B cell (primary cell): ENCODE measurements at regions of chr5 and their contacts with region 1.

Region 1: GRCh38 chr5:139560752-139561654 is at the start of gene UBE2D2:
- DNase-seq: peak; percentile 98
- ATAC-seq: peak; percentile 88
- H3K4me3 ChIP-seq: peak within 1 kb of the TSS; percentile 56 to 92 (median 87)
- H3K4me3 Mint-ChIP-seq: peak within 1 kb of the TSS; percentile 97
- H3K27ac ChIP-seq: peak within 1 kb of the TSS; percentile 75 to 91
- H3K27ac Mint-ChIP-seq: peak within 1 kb of the TSS; percentile 91
- H3K4me1 ChIP-seq: peaks cover 35 to 39% of the 10 kb centered on the region in 2 donors
- H3K4me1 Mint-ChIP-seq: peaks cover 32% of the 10 kb centered on the region
- H3K27me3 ChIP-seq: no peaks in the 10 kb centered on the region
- H3K27me3 Mint-ChIP-seq: no peaks in the 10 kb centered on the region
- CTCF ChIP-seq: no peak
- total RNA-seq, gene UBE2D2: 168 and 183 TPM in 2 replicates

Region 2: DNA sequence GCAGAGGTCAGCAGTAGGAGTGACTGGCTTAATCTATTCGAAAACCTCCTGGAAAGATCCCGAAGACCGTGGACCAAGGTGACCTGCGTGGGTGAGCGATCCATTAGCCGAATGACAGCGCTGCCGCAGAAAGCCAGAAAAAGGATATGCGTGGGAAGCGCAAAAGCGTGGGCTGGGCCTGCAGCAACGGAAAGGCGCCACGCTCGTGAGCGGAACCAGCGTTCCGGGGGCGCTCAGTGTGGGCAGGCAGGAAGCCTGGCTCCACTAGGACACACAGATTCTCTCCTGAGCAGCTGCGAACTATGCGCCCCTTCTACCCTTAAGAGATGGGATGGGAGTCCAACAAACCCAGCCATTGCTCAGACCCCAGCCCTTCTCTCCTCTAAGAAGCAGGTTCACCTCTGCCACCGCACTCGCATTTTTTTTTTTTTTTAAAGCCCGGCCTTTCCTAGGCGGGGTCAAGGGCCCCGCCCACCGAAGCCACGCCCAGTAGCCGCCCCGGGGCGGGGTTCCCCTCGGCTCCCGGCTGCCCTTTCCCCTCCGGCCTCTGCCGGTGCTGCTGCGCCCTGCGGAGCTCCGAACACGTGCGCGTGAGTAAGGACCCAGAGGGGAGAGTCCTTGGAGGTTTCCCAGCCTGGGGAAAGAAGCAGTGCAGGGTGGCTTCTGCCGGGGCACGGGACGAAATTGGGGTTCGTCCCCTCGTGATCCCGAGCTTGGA is 287.3 kb before region 1 on chr5:
- CTCF ChIA-PET with region 1: no interaction called
- POLR2A ChIA-PET with region 1: no interaction called
- intact Hi-C with region 1: loop called (anchors 5 kb)
- DNase-seq: peak; percentile 95
- ATAC-seq: peak; percentile 98
- H3K4me3 ChIP-seq: peak overlapping the region; percentile 61 to 86 (median 75)
- H3K4me3 Mint-ChIP-seq: peak overlapping the region; percentile 92
- H3K27ac ChIP-seq: peak overlapping the region; percentile 62 to 74
- H3K27ac Mint-ChIP-seq: peak overlapping the region; percentile 91
- H3K4me1 ChIP-seq: peaks cover 32 to 44% of the 10 kb centered on the region in 2 donors
- H3K4me1 Mint-ChIP-seq: peaks cover 46% of the 10 kb centered on the region
- H3K27me3 ChIP-seq: no peaks in the 10 kb centered on the region
- H3K27me3 Mint-ChIP-seq: no peaks in the 10 kb centered on the region
- CTCF ChIP-seq: no peak

Region 3: GRCh38 chr5:139439013-139439903 is 121.7 kb before region 1 on chr5 and contains the start of gene DNAJC18:
- CTCF ChIA-PET with region 1: interaction called, 3 read pairs
- POLR2A ChIA-PET with region 1: no interaction called
- intact Hi-C with region 1: loop called (anchors 1 kb)
- DNase-seq: peak; percentile 93
- ATAC-seq: peak; percentile 94
- H3K4me3 ChIP-seq: peak within 1 kb of the TSS; percentile 53 to 97 (median 91)
- H3K4me3 Mint-ChIP-seq: peak within 1 kb of the TSS; percentile 97
- H3K27ac ChIP-seq: peak within 1 kb of the TSS; percentile 98 to 100
- H3K27ac Mint-ChIP-seq: peak within 1 kb of the TSS; percentile 99
- H3K4me1 ChIP-seq: peaks cover 11 to 12% of the 10 kb centered on the region in 2 donors
- H3K4me1 Mint-ChIP-seq: peaks cover 16% of the 10 kb centered on the region
- H3K27me3 ChIP-seq: no peaks in the 10 kb centered on the region
- H3K27me3 Mint-ChIP-seq: peaks cover 3% of the 10 kb centered on the region
- CTCF ChIP-seq: no peak
- total RNA-seq, gene DNAJC18: 13.6 and 16.5 TPM in 2 replicates

Region 4: DNA sequence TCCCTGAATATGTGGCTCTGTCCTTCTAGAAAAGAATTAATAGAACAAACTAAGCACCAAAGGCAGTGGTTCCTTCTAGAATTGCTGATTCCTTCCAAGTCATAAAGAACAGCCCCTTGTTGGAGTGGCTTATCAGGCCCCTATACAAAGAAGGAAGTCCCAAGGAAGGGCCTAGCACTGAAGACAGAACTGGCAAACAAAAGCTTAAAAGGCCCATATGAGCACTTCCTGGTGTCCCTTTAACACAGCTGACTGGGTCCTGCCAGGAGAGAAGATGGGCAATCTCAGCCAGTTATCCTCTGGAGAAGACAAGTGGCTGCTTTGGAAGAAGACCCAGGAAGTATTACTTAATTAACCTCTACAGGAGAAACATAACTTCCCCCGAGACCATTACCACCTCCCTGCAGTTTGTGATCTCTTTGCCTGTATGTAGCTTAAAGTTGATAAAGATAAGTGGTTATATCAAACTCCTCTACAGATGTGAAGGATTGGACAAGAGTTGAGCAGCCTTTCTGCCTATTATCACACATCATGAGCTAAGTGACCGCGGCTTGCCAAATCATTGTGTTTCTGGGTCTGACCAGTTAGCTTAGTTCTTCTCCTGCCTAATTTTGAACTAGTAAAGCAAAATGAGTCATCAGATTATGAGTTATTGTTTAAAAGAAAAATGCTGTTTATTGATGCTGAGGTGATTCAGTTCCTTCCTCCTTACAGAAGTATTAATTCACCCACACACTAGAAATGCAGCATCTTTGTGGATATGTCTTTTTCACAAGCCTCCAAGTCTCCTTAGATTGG is 65.2 kb before region 1 on chr5:
- CTCF ChIA-PET with region 1: no interaction called
- POLR2A ChIA-PET with region 1: no interaction called
- intact Hi-C with region 1: no loop called
- DNase-seq: no peak
- ATAC-seq: no peak
- H3K4me3 ChIP-seq: no peak overlapping the region
- H3K4me3 Mint-ChIP-seq: no peak overlapping the region
- H3K27ac ChIP-seq: no peak overlapping the region
- H3K27ac Mint-ChIP-seq: no peak overlapping the region
- H3K4me1 ChIP-seq: no peaks in the 10 kb centered on the region
- H3K4me1 Mint-ChIP-seq: peaks cover 5% of the 10 kb centered on the region
- H3K27me3 ChIP-seq: peaks cover 0 to under 1% (median 0%) of the 10 kb centered on the region in 4 experiments
- H3K27me3 Mint-ChIP-seq: no peaks in the 10 kb centered on the region
- CTCF ChIP-seq: no peak

Region 5: DNA sequence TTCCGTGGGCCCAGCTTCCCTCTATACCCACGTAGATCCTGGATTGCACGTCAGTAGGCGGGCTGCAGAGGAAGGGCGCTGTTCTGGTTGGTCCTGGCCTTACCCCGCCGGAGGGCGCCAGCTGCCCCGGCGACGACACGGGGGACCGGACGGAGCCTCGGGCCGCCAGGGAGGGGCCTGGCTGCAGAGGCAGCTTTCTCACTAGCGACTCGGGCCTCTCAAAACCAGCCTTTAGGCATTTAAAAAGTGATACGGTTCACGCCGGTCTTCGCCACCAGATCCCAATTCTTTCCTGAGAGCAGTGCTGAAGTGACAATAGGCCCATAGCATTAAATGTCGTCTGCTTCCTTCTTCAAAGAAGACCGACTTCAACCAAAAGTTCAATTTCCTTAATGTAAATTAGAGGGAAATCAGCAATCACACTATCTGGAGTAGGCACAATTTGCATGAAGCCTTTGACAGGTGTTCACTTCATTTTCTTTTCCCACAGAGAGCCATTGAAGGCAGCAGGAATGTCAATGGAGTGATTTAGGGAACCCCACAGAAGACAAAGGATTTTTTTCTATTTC is 17.5 kb before region 1 on chr5:
- CTCF ChIA-PET with region 1: interaction called, 8 read pairs
- POLR2A ChIA-PET with region 1: interaction called, 7 read pairs
- intact Hi-C with region 1: loop called (anchors 1 kb)
- DNase-seq: peak; percentile 85
- ATAC-seq: peak; percentile 99
- H3K4me3 ChIP-seq: peak overlapping the region in 4 of 5 experiments; percentile 20 to 61 (median 50)
- H3K4me3 Mint-ChIP-seq: peak overlapping the region; percentile 79
- H3K27ac ChIP-seq: peak overlapping the region; percentile 71 to 74
- H3K27ac Mint-ChIP-seq: peak overlapping the region; percentile 90
- H3K4me1 ChIP-seq: peaks cover 6 to 16% of the 10 kb centered on the region in 2 donors
- H3K4me1 Mint-ChIP-seq: peaks cover 16% of the 10 kb centered on the region
- H3K27me3 ChIP-seq: no peaks in the 10 kb centered on the region
- H3K27me3 Mint-ChIP-seq: no peaks in the 10 kb centered on the region
- CTCF ChIP-seq: peak; percentile 57

Region 6: GRCh38 chr5:139593716-139594319 is 32.8 kb after region 1 on chr5:
- CTCF ChIA-PET with region 1: interaction called, 3 read pairs
- POLR2A ChIA-PET with region 1: interaction called, 11 read pairs
- intact Hi-C with region 1: no loop called
- DNase-seq: no peak
- ATAC-seq: no peak
- H3K4me3 ChIP-seq: no peak overlapping the region
- H3K4me3 Mint-ChIP-seq: no peak overlapping the region
- H3K27ac ChIP-seq: peak overlapping the region in 1 of 2 donors; percentile 59
- H3K27ac Mint-ChIP-seq: peak overlapping the region; percentile 37
- H3K4me1 ChIP-seq: peaks cover 40 to 56% of the 10 kb centered on the region in 2 donors
- H3K4me1 Mint-ChIP-seq: peaks cover 56% of the 10 kb centered on the region
- H3K27me3 ChIP-seq: no peaks in the 10 kb centered on the region
- H3K27me3 Mint-ChIP-seq: no peaks in the 10 kb centered on the region
- CTCF ChIP-seq: no peak

Region 7: DNA sequence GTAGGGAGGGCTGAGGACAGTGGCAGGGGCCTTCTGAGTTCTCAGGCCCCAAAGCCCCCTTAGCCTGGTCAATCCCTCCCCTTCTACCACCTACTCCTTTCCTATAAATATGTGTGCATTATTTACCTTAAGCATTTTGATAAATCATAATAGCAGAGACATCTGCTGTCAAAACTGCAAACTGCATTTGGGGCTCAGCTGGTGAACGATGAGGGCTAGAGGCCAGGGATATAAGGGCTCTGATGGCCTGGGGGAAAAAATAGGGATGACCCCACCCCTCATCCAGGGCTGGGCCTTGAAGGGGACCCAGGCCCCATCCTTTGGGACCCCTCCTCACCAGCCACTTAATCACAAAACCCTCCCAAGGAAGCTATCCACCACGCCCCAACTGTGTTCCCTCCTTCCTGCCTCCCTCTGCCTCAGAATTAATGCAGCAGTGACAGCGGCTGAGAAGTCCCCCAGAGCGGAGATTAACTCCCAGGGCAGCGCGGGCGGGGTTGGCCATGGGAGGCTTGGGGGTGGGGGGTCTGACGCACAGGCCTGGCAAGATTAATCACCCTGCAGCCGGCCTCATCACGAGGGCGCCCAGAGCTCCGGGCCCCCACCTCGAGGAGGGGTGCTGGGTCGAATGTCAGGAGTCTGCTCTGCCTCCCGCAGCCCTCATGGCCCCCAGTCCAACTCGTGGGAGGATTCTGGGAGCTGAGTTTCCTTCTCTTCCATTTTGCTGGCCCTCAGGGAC is 129.2 kb after region 1 on chr5:
- CTCF ChIA-PET with region 1: interaction called, 12 read pairs
- POLR2A ChIA-PET with region 1: no interaction called
- intact Hi-C with region 1: no loop called
- DNase-seq: peak; percentile 71
- ATAC-seq: peak; percentile 51
- H3K4me3 ChIP-seq: peak overlapping the region in 2 of 5 experiments; percentile 8 to 9
- H3K4me3 Mint-ChIP-seq: peak overlapping the region; percentile 41
- H3K27ac ChIP-seq: peak overlapping the region; percentile 28 to 47
- H3K27ac Mint-ChIP-seq: peak overlapping the region; percentile 78
- H3K4me1 ChIP-seq: peaks cover 47 to 56% of the 10 kb centered on the region in 2 donors
- H3K4me1 Mint-ChIP-seq: peaks cover 52% of the 10 kb centered on the region
- H3K27me3 ChIP-seq: no peaks in the 10 kb centered on the region
- H3K27me3 Mint-ChIP-seq: no peaks in the 10 kb centered on the region
- CTCF ChIP-seq: peak; percentile 70

Region 8: DNA sequence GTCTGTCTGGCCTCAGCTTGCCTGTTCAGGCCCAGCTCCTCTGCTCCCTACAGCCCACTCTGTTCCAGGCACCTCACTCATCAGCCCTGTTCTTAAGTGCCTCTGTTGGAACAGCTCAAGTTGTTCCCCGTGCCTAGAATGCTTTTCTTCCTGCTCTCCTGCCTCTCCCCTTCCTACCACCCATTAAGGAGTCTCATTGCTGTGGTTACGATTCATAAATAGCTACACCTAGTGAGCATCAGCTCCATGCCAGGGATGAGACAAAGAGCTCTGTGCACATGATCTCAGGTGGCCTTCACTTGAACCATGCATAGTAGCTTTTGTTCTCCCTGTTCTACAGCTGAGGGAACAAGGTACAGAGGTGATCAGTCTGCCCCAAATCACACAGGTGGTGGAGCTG is 288.9 kb after region 1 on chr5:
- CTCF ChIA-PET with region 1: no interaction called
- POLR2A ChIA-PET with region 1: no interaction called
- intact Hi-C with region 1: loop called (anchors 5 kb)
- DNase-seq: no peak
- ATAC-seq: no peak
- H3K4me3 ChIP-seq: no peak overlapping the region
- H3K4me3 Mint-ChIP-seq: peak overlapping the region; percentile 85
- H3K27ac ChIP-seq: no peak overlapping the region
- H3K27ac Mint-ChIP-seq: peak overlapping the region; percentile 42
- H3K4me1 ChIP-seq: peaks cover 8 to 12% of the 10 kb centered on the region in 2 donors
- H3K4me1 Mint-ChIP-seq: peaks cover 11% of the 10 kb centered on the region
- H3K27me3 ChIP-seq: peaks cover 0 to 22% (median 10%) of the 10 kb centered on the region in 4 experiments
- H3K27me3 Mint-ChIP-seq: peaks cover 4% of the 10 kb centered on the region
- CTCF ChIP-seq: no peak

Region 9: DNA sequence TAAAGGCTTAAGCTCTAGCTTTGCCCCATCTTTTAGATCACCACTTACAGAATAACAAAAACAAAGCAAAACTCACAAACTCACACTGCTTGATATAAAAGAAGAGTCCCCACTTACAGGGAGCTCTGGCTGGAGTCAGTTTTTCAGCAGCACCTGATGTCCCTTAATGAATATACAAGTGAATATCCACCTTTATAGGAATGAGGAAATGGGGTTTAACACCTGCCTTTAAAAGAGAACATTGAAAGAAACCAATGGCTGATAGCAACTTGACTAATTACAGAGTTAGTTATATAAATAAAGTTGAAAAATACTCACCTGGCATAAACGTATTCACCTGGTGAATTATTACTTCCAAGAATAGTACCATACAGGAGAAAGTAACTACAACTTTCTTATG is 532.2 kb after region 1 on chr5:
- CTCF ChIA-PET with region 1: no interaction called
- POLR2A ChIA-PET with region 1: no interaction called
- intact Hi-C with region 1: no loop called
- DNase-seq: no peak
- ATAC-seq: no peak
- H3K4me3 ChIP-seq: no peak overlapping the region
- H3K4me3 Mint-ChIP-seq: no peak overlapping the region
- H3K27ac ChIP-seq: no peak overlapping the region
- H3K27ac Mint-ChIP-seq: no peak overlapping the region
- H3K4me1 ChIP-seq: no peaks in the 10 kb centered on the region
- H3K4me1 Mint-ChIP-seq: no peaks in the 10 kb centered on the region
- H3K27me3 ChIP-seq: peaks cover 0 to 9% (median 0%) of the 10 kb centered on the region in 4 experiments
- H3K27me3 Mint-ChIP-seq: peaks cover 29% of the 10 kb centered on the region
- CTCF ChIP-seq: no peak